ENCODE measurements at regions of chr20 and their contacts with region 1.

Region 1: DNA sequence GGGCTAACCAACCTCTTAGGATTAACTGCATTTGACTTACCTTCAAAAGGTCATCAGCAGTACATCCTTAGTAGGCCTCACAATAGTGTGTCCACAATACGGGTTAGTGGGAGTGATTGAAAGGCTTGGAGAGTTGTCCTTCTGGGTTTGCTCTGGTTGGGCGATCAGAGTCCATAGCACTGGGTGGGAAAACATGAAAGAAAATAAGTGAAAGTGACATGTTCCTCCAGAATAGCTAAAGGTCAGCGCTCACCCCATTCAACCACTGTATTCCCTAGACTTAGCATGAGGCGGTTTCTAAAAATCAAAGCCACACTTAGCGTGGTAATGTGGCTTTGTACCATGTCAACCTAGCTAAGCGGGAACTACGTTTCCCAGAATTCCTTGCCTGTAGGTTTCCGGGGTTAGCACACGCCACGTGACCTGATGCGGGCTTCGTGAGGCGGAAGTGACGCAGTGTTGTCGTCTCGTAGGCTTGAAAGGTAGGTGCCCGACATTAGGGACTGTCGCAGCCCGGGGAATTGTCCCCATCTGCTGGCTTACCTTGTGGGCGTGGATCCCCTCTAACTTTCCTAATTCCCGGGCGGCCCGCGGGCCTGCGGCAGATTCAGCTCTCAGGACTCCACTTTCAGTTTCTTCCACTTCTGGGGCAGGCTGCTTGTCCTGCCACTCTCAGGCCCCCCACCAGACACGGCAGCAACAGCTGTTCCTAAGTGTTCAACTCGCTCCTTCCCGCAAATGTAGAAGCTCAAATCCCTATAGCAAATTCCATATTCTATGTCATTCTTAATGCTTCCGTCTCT is 19.8 kb upstream of the SCP2D1 start:
- DNase-seq: peak; percentile 98
- H3K4me3 ChIP-seq: peak overlapping the region; percentile 72 to 85 (median 76)
- H3K27ac ChIP-seq: peak overlapping the region; percentile 87 to 93 (median 90)
- H3K4me1 ChIP-seq: peaks cover 10 to 13% (median 12%) of the 10 kb centered on the region in 4 donors
- H3K27me3 ChIP-seq: no peaks in the 10 kb centered on the region
- CTCF ChIP-seq: no peak
- EP300 ChIP-seq: no peak
- POLR2A ChIP-seq: no peak

Region 2: GRCh38 chr20:18587665-18588573 is 205.9 kb before region 1 on chr20 and contains the start of gene DTD1:
- intact Hi-C with region 1: loop called (anchors 10 kb)
- DNase-seq: peak; percentile 97
- H3K4me3 ChIP-seq: peak within 1 kb of the TSS; percentile 86 to 98 (median 94)
- H3K27ac ChIP-seq: peak within 1 kb of the TSS; percentile 78 to 87 (median 83)
- H3K4me1 ChIP-seq: peaks cover 11 to 17% (median 15%) of the 10 kb centered on the region in 4 donors
- H3K27me3 ChIP-seq: no peaks in the 10 kb centered on the region
- CTCF ChIP-seq: peak; percentile 70 to 83 (median 74)
- EP300 ChIP-seq: no peak
- POLR2A ChIP-seq: no peak
- total RNA-seq, gene DTD1: 15.1 to 20.0 (median 17.5) TPM

Region 3: GRCh38 chr20:20489054-20489453 is 1695.2 kb after region 1 on chr20:
- intact Hi-C with region 1: no loop called
- DNase-seq: no peak
- H3K4me3 ChIP-seq: no peak overlapping the region
- H3K27ac ChIP-seq: no peak overlapping the region
- H3K4me1 ChIP-seq: no peaks in the 10 kb centered on the region
- H3K27me3 ChIP-seq: no peaks in the 10 kb centered on the region
- CTCF ChIP-seq: no peak
- EP300 ChIP-seq: no peak
- POLR2A ChIP-seq: no peak

Measured in esophagus muscularis mucosa (tissue), 4 donors.